PC-3 (cell line): ENCODE measurements at regions of chr2 and their contacts with region 1.

Region 1: GRCh38 chr2:149313512-149313972 is 16.8 kb upstream of the LYPD6 start:
- DNase-seq: peak; percentile 74
- ATAC-seq: peak; percentile 69
- H3K4me3 ChIP-seq: no peak overlapping the region
- H3K27ac ChIP-seq: no peak overlapping the region
- H3K4me1 ChIP-seq: no peaks in the 10 kb centered on the region
- H3K27me3 ChIP-seq: peaks cover 29% of the 10 kb centered on the region
- CTCF ChIP-seq: peak; percentile 84

Region 2: GRCh38 chr2:149017116-149017985 is 296.2 kb before region 1 on chr2:
- CTCF ChIA-PET with region 1: no interaction called
- POLR2A ChIA-PET with region 1: no interaction called
- intact Hi-C with region 1: loop called (anchors 1 kb)
- DNase-seq: peak; percentile 86
- ATAC-seq: peak; percentile 78
- H3K4me3 ChIP-seq: no peak overlapping the region
- H3K27ac ChIP-seq: no peak overlapping the region
- H3K4me1 ChIP-seq: no peaks in the 10 kb centered on the region
- H3K27me3 ChIP-seq: no peaks in the 10 kb centered on the region
- CTCF ChIP-seq: peak; percentile 89

Region 3: DNA sequence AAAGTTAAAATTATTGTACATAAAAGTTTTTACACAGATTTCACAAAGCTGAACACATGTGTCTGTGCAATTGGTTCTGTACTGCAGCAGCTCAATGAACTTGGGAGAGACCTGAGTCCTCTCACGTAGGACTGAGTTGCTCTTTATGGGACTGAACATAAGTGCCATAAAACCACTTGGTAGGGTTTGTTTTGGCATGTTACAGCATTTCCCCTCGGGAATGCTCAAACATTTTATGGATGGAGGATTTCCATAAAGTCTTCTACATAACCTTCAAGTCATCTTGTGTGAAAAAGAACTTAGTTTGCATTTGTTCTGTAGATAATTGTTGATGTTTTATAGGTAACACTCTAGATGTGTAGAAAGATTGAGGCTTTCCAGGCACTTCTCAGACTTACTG is 32.7 kb after region 1 on chr2:
- CTCF ChIA-PET with region 1: no interaction called
- POLR2A ChIA-PET with region 1: no interaction called
- intact Hi-C with region 1: no loop called
- DNase-seq: no peak
- ATAC-seq: no peak; the same call in 1 of the 2 replicates
- H3K4me3 ChIP-seq: no peak overlapping the region
- H3K27ac ChIP-seq: no peak overlapping the region
- H3K4me1 ChIP-seq: no peaks in the 10 kb centered on the region
- H3K27me3 ChIP-seq: no peaks in the 10 kb centered on the region
- CTCF ChIP-seq: no peak